KBM-7 (cell line): ENCODE measurements at regions of chr7 and their contacts with region 1.

Region 1: DNA sequence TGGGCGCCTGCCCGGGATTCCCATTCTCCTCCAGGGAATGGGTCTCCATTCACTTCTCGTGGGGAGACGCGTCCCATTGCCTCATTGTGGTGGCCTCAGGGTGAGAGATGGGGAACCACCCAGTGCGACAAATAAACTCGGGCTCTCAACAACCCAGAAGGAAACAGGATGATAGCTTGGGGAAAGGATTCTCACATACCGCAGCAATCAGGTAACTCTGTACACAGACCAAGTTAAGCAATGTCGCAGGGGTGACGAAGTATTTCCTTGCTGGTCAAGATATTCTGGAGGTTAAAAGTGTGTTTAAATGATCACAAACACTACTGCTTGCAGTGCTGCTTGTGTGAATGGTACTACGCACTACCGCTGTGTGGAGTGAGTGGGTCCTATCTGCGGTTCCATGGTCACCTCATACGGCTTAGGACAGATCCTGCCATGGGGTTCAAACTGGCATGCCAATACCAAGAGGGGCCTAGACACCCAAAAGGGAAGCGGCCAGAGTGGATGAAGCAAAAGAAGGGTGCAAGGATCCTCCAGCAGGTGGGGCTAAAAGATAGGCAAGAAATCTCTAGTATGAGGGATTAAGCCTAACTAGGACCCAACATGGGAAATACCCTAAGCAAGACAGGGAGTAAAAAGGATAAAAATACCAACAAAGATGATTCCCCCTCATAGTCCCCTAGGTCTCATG is 143.8 kb upstream of the TMEM106B start:
- DNase-seq: peak; percentile 81

Region 2: GRCh38 chr7:12322284-12322902 is 255.1 kb after region 1 on chr7:
- in situ Hi-C with region 1: loop called (anchors 25 kb)
- DNase-seq: peak; percentile 36

Region 3: DNA sequence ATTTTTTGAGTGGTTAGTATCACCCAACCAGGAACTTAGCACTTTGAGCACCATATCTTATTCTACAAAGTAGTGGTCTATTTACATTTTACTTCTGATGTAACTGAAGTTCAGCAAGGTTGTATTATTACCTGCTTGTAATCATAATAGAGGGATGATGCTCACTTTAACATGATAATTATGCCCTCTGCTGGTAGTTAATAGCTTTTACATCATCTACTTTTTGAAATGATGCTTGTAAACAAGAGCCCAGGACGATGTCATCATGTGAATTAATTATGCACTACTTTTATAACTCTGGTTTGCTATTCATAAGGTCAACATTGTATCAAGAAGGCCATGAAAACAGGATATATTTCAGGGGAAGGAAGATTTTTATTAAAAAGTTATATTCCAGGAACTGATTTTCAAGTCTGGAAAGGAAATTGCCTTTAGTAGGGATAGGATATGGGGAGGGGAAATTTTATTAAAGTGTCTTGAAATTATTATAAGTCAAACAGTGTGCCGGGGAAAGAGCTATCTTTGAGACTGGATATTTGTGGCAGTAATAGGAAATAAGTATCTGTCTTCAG is 422.9 kb after region 1 on chr7:
- in situ Hi-C with region 1: loop called (anchors 25 kb)
- DNase-seq: peak; percentile 40